ENCODE measurements at regions of chr9 and their contacts with region 1.

Region 1: GRCh38 chr9:25261445-25261844 is 416.8 kb downstream of the TUSC1 start:
- DNase-seq: no peak
- ATAC-seq: no peak
- H3K4me3 ChIP-seq: no peak overlapping the region
- H3K27ac ChIP-seq: no peak overlapping the region
- H3K4me1 ChIP-seq: no peaks in the 10 kb centered on the region
- H3K27me3 ChIP-seq: no peaks in the 10 kb centered on the region
- CTCF ChIP-seq: no peak
- POLR2A ChIP-seq: no peak

Region 2: GRCh38 chr9:25207402-25208195 is 53.8 kb before region 1 on chr9:
- intact Hi-C with region 1: loop called in 1 of 10 experiments (anchors 10 kb)
- DNase-seq: no peak
- ATAC-seq: peak in 3 of 4 donors; percentile 62 to 77 (median 70)
- H3K4me3 ChIP-seq: no peak overlapping the region
- H3K27ac ChIP-seq: no peak overlapping the region
- H3K4me1 ChIP-seq: no peaks in the 10 kb centered on the region
- H3K27me3 ChIP-seq: no peaks in the 10 kb centered on the region
- CTCF ChIP-seq: no peak
- POLR2A ChIP-seq: no peak

Region 3: DNA sequence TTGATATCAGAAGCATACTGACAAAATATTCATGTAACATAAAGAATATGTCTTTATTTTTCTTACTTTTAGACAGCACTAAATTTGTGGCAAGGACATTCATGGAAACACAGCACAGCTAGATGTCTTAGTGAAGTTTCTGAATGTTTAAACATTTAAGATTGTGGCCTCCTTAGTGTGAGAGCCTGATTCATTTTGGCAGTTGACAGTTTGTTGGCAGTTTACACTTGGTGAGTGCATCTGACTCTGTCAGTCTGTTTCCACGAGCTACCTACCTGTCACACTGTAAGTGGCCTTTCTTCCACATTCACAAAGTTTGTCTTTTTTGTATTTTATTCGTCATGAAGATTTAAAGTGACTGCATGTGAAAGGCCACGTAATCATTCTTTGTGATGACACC is 20.0 kb before region 1 on chr9:
- intact Hi-C with region 1: no loop called
- DNase-seq: no peak
- ATAC-seq: no peak
- H3K4me3 ChIP-seq: no peak overlapping the region
- H3K27ac ChIP-seq: no peak overlapping the region
- H3K4me1 ChIP-seq: no peaks in the 10 kb centered on the region
- H3K27me3 ChIP-seq: no peaks in the 10 kb centered on the region
- CTCF ChIP-seq: no peak
- POLR2A ChIP-seq: no peak

Measured in heart left ventricle (tissue), 16 donors.